Activated CD4-positive, alpha-beta T cell treated with anti-CD3 and anti-CD28 coated beads, Interleukin-2, amount 10 ng/mL, durations not matched to agents 24 days and 14 days (primary cell): ENCODE measurements at regions of chr9 and their contacts with region 1.

Region 1: GRCh38 chr9:109934857-109935215 is 154.8 kb downstream of the PALM2AKAP2 start:
- DNase-seq: peak; percentile 65
- H3K4me3 Mint-ChIP-seq: peak overlapping the region; percentile 17
- H3K27ac Mint-ChIP-seq: peak overlapping the region; percentile 92
- H3K4me1 Mint-ChIP-seq: peaks cover 31% of the 10 kb centered on the region
- H3K27me3 Mint-ChIP-seq: no peaks in the 10 kb centered on the region

Region 2: DNA sequence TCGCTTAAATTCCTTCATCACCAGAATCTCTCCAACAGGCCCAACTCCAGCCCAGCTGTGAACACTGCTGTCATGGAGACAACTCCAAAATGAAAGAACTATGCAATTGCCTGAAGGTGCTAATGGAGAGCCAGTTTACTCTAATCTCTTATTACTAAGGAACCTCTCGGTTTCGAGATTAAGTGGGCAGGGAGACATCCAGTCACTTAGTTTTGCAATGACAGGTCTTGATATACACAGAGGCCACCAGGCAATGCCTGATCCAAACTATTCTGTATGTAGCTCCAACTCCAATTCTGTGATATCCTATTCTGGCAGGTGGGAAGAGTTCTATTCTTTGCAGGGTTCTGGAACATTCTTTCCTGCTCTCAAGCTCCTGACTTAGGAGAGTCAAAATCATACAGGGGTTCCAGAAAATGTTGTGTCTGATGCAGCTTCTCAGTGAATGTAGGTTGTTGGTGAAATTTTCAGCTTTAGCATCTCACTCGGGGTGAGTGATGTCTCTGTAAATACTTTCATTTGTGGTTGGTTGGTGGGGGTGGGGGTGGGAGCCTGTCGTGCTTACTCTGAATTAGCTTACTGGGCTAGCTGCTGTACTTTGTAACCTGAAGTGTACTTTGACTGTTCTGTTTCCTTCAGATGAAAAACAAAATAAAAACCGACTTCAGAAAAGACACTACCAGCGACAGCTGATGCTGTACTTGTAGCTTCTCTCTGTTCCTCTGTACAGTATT is 16.0 kb after region 1 on chr9:
- intact Hi-C with region 1: loop called (anchors 1 kb)
- DNase-seq: peak; percentile 72
- H3K4me3 Mint-ChIP-seq: peak overlapping the region; percentile 65
- H3K27ac Mint-ChIP-seq: peak overlapping the region; percentile 93
- H3K4me1 Mint-ChIP-seq: peaks cover 33% of the 10 kb centered on the region
- H3K27me3 Mint-ChIP-seq: no peaks in the 10 kb centered on the region

Region 3: GRCh38 chr9:110081395-110081794 is 146.6 kb after region 1 on chr9:
- intact Hi-C with region 1: no loop called
- DNase-seq: no peak
- H3K4me3 Mint-ChIP-seq: peak overlapping the region; percentile 57
- H3K27ac Mint-ChIP-seq: peak overlapping the region; percentile 68
- H3K4me1 Mint-ChIP-seq: peaks cover 40% of the 10 kb centered on the region
- H3K27me3 Mint-ChIP-seq: no peaks in the 10 kb centered on the region